Activated T-helper 1 cell treated with anti-CD3 and anti-CD28 coated beads, Interleukin-12 subunit alpha, Interleukin-12 subunit beta, Interleukin-2, Interleukin-4 antibody, amounts not matched to agents 30 ng/mL and 10 ng/mL and 1 ng/mL, durations not matched to agents 14 hours and 24 hours and 36 hours (primary cell): ENCODE measurements at regions of chr7 and their contacts with region 1.

Region 1: GRCh38 chr7:148563583-148564274 is 26.8 kb upstream of the C7orf33 start:
- DNase-seq: no peak
- H3K4me3 Mint-ChIP-seq: peak overlapping the region; percentile 36
- H3K27ac Mint-ChIP-seq: peak overlapping the region; percentile 81
- H3K4me1 Mint-ChIP-seq: peaks cover 26% of the 10 kb centered on the region
- H3K27me3 Mint-ChIP-seq: peaks cover 3% of the 10 kb centered on the region

Region 2: DNA sequence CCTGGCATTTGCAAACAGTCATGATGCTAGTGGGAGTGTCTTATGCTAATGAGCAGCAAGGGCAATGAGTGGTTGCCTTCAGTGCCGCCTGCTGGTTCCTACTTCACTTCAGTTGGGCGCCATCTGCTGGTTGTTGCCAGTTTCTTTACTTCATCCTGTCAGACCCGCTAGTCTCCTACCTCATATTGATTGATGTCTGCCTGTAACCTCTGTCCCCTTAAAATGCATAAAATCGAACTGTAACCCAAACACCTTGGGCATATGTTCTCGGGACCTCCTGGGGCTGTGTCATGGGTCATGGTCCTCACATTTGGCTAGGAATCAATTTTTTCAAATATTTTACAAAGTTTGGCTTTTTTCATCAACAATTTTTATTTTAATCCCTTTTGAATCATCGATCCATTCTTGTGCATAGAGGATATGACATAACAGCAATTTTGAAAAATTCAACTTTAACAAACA is 36.0 kb before region 1 on chr7:
- intact Hi-C with region 1: loop called (anchors 5 kb)
- DNase-seq: peak; percentile 78
- H3K4me3 Mint-ChIP-seq: no peak overlapping the region
- H3K27ac Mint-ChIP-seq: peak overlapping the region; percentile 22
- H3K4me1 Mint-ChIP-seq: peaks cover 12% of the 10 kb centered on the region
- H3K27me3 Mint-ChIP-seq: peaks cover 20% of the 10 kb centered on the region

Region 3: DNA sequence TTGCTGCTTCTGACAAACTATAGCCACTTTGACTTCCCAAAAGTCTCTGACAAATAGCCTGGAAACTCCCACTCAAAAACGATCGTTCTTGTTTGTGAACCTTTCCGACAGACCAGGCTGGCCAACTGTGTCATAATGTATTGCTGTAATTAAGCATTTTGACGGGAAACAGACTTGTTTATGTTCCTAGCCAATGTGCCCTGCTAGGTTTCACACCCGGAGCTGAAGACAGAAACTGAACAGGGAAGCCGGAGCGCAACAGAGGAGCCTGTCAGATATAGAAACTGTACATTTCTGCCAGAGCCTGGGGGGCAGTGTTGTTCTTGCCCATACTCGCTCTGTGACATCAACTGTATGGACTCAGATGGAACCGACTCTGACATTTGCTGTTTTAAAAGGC is 28.5 kb before region 1 on chr7:
- intact Hi-C with region 1: loop called (anchors 1 kb)
- DNase-seq: peak; percentile 13
- H3K4me3 Mint-ChIP-seq: peak overlapping the region; percentile 47
- H3K27ac Mint-ChIP-seq: peak overlapping the region; percentile 81
- H3K4me1 Mint-ChIP-seq: peaks cover 9% of the 10 kb centered on the region
- H3K27me3 Mint-ChIP-seq: no peaks in the 10 kb centered on the region

Region 4: DNA sequence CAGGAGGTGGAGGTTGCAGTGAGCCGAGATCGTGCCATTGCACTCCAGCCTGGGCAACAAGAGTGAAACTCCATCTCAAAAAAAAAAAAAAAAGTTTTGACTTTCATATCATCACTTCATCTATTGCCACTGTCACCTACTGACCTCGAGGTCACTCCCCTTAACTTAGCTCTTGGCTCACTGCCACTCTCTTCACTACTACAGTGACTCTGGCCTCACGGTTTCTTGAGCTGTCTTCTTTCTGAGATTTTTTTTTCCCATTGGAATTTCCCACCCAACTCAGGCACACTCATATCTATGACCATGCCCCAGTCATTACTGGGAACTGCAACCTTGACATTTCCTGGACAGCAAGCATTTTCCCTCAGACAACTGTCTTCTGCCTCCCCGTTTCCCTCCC is 15.8 kb before region 1 on chr7:
- intact Hi-C with region 1: loop called (anchors 2 kb)
- DNase-seq: no peak
- H3K4me3 Mint-ChIP-seq: no peak overlapping the region
- H3K27ac Mint-ChIP-seq: no peak overlapping the region
- H3K4me1 Mint-ChIP-seq: peaks cover 7% of the 10 kb centered on the region
- H3K27me3 Mint-ChIP-seq: peaks cover 11% of the 10 kb centered on the region

Region 5: DNA sequence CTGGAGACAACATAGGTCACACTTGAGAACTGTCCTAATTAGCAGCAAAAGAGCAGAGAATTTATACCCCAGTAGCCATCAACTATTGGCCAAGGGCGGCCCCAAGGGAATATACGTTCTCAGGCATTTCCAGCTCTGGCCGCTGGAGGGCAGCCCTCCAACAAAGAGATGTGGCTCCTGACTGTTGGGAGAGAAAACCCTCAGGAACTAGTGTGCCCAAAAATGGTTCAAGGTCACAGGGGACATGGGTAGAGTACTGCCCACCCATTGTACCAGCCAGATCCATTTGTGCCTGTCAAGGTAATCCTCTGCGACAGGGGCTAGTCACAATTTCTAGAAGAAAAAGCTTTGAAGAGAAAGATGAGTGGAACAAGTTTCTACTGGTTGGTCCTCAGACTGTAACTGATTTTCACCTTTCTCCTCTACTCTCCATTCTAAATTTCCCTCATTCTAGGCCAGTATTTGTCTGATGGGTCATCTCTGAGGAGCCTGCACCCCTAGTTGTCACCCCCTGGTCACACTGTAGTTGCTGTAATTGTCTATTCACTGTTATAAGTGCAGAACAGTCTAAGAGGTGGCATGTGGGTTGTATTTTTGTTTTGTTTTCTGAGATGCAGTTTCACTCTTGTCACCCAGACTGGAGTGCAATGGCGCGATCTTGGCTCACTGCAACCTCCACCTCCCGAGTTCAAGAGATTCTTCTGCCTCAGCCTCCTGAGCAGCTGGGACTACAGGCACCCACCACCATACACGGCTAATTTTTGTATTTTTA is 12.1 kb after region 1 on chr7:
- intact Hi-C with region 1: loop called (anchors 1 kb)
- DNase-seq: peak; percentile 47
- H3K4me3 Mint-ChIP-seq: no peak overlapping the region
- H3K27ac Mint-ChIP-seq: no peak overlapping the region
- H3K4me1 Mint-ChIP-seq: peaks cover 24% of the 10 kb centered on the region
- H3K27me3 Mint-ChIP-seq: peaks cover 3% of the 10 kb centered on the region

Region 6: DNA sequence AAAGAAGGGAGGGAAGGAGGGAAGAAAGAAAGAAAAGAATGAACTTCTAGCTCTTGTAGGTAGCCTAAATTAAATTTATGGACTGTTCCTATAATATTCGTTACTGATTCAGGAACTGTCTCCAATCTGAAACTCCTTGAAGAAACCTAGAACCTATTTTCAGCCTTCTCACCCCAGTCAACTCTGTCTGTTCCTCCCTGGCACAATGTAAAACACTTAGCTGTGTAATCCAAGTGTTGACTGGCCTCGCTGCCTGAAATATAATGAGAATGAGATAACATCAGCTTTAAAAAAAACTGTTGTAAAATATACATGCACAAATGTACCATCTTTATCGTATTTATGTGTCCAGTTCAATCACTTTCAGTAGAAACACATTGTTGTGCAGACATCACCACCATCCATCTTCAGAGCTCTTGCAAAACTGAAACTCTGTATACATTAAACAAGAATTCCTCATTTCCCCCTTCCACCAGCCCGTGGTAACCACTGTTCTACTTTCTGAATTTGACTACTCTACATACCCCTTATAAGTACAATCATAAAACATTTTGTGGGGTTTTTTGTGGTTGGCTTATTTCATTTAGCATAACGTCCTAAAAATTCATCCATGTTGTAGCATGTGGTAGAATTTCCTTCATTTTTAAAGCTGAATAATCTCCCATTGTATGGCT is 20.6 kb after region 1 on chr7:
- intact Hi-C with region 1: loop called (anchors 2 kb)
- DNase-seq: no peak
- H3K4me3 Mint-ChIP-seq: no peak overlapping the region
- H3K27ac Mint-ChIP-seq: no peak overlapping the region
- H3K4me1 Mint-ChIP-seq: peaks cover 24% of the 10 kb centered on the region
- H3K27me3 Mint-ChIP-seq: peaks cover 8% of the 10 kb centered on the region

Region 7: GRCh38 chr7:148914208-148914777 is 350.6 kb after region 1 on chr7:
- intact Hi-C with region 1: loop called (anchors 1 kb)
- DNase-seq: peak; percentile 34
- H3K4me3 Mint-ChIP-seq: peak overlapping the region; percentile 77
- H3K27ac Mint-ChIP-seq: peak overlapping the region; percentile 94
- H3K4me1 Mint-ChIP-seq: peaks cover 63% of the 10 kb centered on the region
- H3K27me3 Mint-ChIP-seq: peaks cover 2% of the 10 kb centered on the region

Region 8: DNA sequence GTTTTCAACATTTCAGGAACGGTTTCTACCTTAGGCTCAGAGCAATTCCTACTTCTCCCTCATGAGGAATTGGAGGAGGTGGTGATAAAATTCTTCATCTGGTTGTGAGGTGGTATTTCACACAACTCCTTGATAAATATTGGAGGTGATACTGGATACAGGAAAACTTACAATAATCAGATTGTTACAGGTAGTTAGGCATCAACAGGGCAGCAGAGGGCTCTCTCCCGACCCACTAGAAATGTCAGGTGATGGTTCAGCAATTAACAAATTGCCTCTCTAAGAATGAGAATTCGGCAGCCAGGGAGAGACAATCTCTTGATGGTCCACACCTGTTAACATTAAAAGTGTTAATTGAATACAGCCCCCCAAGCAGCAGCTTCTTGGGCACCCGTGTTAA is 504.1 kb after region 1 on chr7:
- intact Hi-C with region 1: no loop called
- DNase-seq: no peak
- H3K4me3 Mint-ChIP-seq: peak overlapping the region; percentile 12
- H3K27ac Mint-ChIP-seq: no peak overlapping the region
- H3K4me1 Mint-ChIP-seq: peaks cover 8% of the 10 kb centered on the region
- H3K27me3 Mint-ChIP-seq: no peaks in the 10 kb centered on the region